ENCODE measurements at regions of chr22 and their contacts with region 1.

Region 1: GRCh38 chr22:38777087-38777671 is 16.8 kb downstream of the DNAL4 start:
- DNase-seq: no peak
- H3K4me3 ChIP-seq: no peak overlapping the region
- H3K27ac ChIP-seq: no peak overlapping the region
- H3K4me1 ChIP-seq: no peaks in the 10 kb centered on the region
- H3K27me3 ChIP-seq: no peaks in the 10 kb centered on the region
- CTCF ChIP-seq: no peak
- POLR2A ChIP-seq: no peak

Region 2: DNA sequence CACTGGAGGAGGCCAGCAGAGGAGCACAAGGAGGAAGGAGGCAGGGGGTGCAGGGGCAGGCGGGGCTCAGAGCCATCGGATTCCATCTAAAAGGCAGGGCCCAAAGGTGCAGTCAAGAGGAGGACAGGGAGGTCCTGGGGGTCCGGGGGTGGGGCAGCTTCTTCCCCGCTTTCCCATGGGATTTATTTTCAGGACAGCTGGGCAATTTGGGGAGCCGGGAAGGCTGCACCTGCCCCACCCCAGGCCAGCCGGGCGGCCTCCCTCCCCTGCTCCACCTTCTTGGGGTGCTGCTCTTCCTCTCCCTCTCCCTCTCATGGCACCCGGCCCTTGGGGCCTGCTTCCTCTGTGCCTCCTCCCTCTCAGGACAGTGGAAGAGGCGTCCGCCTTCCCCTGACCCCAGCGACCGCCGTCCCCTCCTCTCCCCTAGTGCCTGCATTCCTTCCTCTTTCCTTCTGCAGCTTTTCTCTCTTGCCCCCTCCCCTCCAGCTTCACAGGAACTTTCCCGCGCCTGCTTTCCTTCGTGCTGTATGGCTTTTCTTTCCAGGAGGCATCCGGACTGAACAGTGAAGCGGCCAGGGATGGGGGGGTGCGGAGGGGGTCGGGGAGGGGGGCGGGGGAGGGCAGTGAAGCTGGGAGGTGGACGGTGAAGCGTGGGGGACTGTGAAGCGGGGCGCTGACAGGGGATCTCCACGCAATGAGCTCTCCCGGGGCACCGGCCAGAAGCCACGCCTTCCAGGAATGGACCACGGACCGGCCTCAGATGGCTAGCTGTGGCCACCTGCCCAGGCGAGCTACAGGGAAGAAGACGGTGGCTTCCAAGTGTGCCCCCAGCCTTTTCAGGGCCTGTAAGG is 346.8 kb after region 1 on chr22:
- intact Hi-C with region 1: loop called (anchors 10 kb)
- DNase-seq: no peak
- H3K4me3 ChIP-seq: no peak overlapping the region
- H3K27ac ChIP-seq: no peak overlapping the region
- H3K4me1 ChIP-seq: no peaks in the 10 kb centered on the region
- H3K27me3 ChIP-seq: no peaks in the 10 kb centered on the region
- CTCF ChIP-seq: no peak
- POLR2A ChIP-seq: no peak

Region 3: DNA sequence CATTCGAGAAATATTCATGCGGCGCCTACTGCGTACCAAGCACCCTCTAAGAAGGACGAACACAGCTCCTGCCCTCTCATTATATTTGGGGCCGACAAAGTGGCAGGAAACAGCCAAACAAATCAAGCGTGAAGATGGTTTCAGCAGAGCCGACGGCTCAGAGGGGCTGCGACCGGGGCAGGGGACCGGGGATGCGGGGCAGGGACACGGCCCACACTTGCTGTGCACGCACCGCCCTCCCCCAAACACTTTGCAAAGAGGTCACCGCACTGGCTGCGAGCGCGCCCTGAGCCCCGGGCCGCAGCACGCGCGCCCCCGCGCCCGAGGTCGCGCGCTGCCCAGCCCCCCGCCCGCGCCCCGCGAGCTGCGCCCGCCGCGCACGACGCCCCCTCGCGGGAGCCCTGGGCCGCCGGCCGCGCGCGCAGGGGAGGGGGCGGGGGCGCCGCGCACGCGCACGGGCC is 572.4 kb after region 1 on chr22:
- intact Hi-C with region 1: no loop called
- DNase-seq: peak; percentile 14 to 19
- H3K4me3 ChIP-seq: peak overlapping the region in 1 of 3 donors; percentile 68
- H3K27ac ChIP-seq: no peak overlapping the region
- H3K4me1 ChIP-seq: peaks cover 14 to 17% of the 10 kb centered on the region in 2 donors
- H3K27me3 ChIP-seq: no peaks in the 10 kb centered on the region
- CTCF ChIP-seq: no peak
- POLR2A ChIP-seq: no peak

Measured in thyroid gland (tissue), 4 donors.